H1 (cell line): ENCODE measurements at regions of chr5 and their contacts with region 1.

Region 1: DNA sequence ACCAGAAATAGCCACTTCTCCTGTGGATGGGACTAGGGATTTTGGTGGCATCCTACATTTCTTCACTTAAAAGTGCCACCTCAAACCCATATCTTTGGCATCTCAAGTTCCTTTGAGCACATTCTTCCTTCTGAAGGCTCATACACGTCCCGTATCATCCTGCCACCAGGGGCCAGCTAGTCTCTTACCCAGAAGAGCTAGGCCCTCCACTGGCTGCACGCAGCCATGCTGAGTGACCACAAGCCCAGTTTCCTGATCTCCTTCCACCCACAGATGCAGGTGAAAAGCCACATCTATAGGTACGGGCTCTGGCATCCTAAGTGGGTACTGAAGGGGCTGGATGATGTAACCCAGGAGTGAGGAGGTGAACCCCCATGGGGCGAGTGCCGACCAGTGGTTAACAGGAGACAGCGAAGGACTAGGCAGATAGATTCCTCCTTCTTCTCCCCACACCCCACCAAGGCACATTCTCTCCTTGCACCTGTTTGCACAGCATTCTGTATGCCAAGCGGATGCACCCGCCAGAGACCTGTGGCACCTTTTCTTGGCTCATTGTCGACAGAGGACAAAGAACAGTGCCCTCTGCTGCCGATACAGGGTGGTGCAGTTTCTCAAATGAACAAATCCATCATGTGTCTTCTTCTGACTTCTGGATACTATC is 14.4 kb upstream of the SCGB3A1 start:
- DNase-seq: peak; percentile 29 to 86
- H3K4me3 ChIP-seq: no peak overlapping the region
- H3K27ac ChIP-seq: no peak overlapping the region
- H3K4me1 ChIP-seq: no peaks in the 10 kb centered on the region; a peak in 2 of 7 replicates
- H3K27me3 ChIP-seq: no peaks in the 10 kb centered on the region
- CTCF ChIP-seq: peak in 2 of 3 experiments; percentile 78 to 85; a peak in 3 of 4 replicates
- EP300 ChIP-seq: no peak
- POLR2A ChIP-seq: no peak
- RAD21 ChIP-seq: peak; percentile 54 to 69

Region 2: DNA sequence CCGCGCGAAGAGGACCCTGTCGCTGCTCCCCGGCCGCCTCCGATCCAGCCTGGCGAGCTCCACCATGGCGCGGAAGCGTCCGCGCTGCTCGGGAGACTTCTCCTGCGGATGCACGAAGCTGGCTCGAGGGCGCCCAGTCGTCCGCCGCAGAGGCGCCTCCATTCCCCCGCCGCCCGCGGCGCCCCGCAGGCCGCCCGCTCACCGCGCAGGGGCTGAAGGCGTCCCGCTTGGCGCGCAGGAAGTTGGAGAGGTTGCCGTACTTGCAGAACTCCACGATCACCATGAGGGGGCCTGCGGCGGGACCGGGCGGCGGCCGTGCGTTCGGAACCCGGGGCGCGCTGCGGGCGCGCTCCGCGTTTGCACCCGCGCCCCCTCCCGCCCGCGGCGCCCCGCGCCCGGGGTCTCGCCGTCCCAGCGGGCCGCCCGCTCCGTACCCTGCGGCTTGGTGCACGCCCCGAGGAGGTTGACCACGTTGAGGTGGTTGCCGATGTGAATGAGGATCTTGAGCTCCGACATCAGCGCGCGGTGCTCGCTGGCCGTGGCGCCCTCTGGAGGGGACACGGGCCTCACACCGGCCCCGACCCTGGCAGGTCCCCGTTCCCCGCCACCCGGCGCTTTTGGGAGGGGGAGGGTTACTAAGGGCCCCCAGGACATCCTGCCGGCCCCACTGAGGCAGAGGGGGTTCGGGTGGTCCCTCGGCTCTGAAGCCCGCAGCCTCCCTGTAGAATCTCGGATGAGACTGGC is 13.3 kb after region 1 on chr5:
- CTCF ChIA-PET with region 1: interaction called, 52 read pairs
- POLR2A ChIA-PET with region 1: interaction called, 6 read pairs
- DNase-seq: peak; percentile 15 to 85
- H3K4me3 ChIP-seq: peak overlapping the region; percentile 47 to 74 (median 62)
- H3K27ac ChIP-seq: no peak overlapping the region
- H3K4me1 ChIP-seq: peaks cover 0 to 4% (median 1%) of the 10 kb centered on the region in 4 experiments; a peak in 4 of 7 replicates
- H3K27me3 ChIP-seq: peaks cover 0 to 13% (median 7%) of the 10 kb centered on the region in 4 experiments; a peak in 5 of 7 replicates
- CTCF ChIP-seq: peak in 2 of 3 experiments; percentile 64 to 69; a peak in 3 of 4 replicates
- EP300 ChIP-seq: no peak
- POLR2A ChIP-seq: no peak
- RAD21 ChIP-seq: peak; percentile 4 to 21; a peak in 2 of 4 replicates

Region 3: GRCh38 chr5:180624587-180624986 is 18.9 kb after region 1 on chr5:
- CTCF ChIA-PET with region 1: interaction called, 52 read pairs
- POLR2A ChIA-PET with region 1: interaction called, 6 read pairs
- DNase-seq: no peak
- H3K4me3 ChIP-seq: no peak overlapping the region
- H3K27ac ChIP-seq: no peak overlapping the region
- H3K4me1 ChIP-seq: peaks cover 0 to under 1% (median 0%) of the 10 kb centered on the region in 4 experiments; a peak in 2 of 7 replicates
- H3K27me3 ChIP-seq: peaks cover 0 to 2% (median 0%) of the 10 kb centered on the region in 4 experiments; a peak in 3 of 7 replicates
- CTCF ChIP-seq: no peak
- EP300 ChIP-seq: no peak
- POLR2A ChIP-seq: no peak
- RAD21 ChIP-seq: no peak

Region 4: GRCh38 chr5:180645236-180646204 is 39.8 kb after region 1 on chr5:
- CTCF ChIA-PET with region 1: interaction called, 15 read pairs
- POLR2A ChIA-PET with region 1: no interaction called
- DNase-seq: peak in 1 of 2 experiments; percentile 45
- H3K4me3 ChIP-seq: no peak overlapping the region
- H3K27ac ChIP-seq: no peak overlapping the region
- H3K4me1 ChIP-seq: no peaks in the 10 kb centered on the region; a peak in 2 of 7 replicates
- H3K27me3 ChIP-seq: peaks cover 5 to 33% (median 27%) of the 10 kb centered on the region in 4 experiments
- CTCF ChIP-seq: no peak
- EP300 ChIP-seq: no peak
- POLR2A ChIP-seq: no peak
- RAD21 ChIP-seq: no peak